Activated CD8-positive, alpha-beta T cell treated with anti-CD3 and anti-CD28 coated beads, Interleukin-2, amount 10 ng/mL, durations not matched to agents 7 days and 5 days (primary cell): ENCODE measurements at regions of chr11 and their contacts with region 1.

Region 1: DNA sequence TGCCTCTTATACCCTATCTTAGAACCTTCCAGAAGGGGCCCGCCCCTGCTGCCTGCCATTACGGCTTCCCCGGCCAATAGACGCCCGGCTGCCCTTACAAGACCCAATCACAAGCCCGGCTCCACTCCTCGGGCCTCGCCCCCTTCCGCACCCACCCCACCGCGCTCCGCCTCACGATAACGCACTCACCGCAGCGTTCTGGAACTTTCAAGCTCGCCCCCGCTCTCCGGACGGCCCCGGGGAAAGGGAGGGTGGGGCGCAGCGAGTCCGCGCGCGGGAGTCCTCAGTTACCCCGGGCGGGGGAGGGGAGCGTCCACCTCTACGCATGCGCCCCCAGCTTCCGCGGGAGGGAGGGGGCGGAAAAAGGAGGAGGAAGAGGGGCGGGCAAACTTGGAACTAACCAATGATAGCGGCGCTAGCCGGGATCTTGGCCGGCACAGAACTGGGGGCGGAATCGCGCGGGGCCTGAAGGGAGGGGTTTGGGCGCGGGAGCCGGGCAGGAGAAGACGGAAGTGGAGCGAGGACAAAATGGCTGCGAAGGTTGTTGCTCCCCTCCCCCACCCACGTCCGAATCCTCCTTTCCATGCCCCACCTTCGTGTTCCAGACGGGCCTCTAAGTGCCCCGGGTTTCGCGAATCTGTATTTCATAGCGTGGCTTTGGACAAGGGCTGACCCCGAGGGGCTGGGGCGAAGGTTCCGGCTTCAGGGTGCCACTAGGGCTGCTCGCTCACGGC is 389 bp upstream of the HSPA8 start:
- DNase-seq: peak; percentile 100
- ATAC-seq: peak; percentile 83
- H3K4me3 Mint-ChIP-seq: peak overlapping the region; percentile 98
- H3K27ac Mint-ChIP-seq: peak overlapping the region; percentile 95
- H3K4me1 Mint-ChIP-seq: peaks cover 31% of the 10 kb centered on the region
- H3K27me3 Mint-ChIP-seq: no peaks in the 10 kb centered on the region

Region 2: DNA sequence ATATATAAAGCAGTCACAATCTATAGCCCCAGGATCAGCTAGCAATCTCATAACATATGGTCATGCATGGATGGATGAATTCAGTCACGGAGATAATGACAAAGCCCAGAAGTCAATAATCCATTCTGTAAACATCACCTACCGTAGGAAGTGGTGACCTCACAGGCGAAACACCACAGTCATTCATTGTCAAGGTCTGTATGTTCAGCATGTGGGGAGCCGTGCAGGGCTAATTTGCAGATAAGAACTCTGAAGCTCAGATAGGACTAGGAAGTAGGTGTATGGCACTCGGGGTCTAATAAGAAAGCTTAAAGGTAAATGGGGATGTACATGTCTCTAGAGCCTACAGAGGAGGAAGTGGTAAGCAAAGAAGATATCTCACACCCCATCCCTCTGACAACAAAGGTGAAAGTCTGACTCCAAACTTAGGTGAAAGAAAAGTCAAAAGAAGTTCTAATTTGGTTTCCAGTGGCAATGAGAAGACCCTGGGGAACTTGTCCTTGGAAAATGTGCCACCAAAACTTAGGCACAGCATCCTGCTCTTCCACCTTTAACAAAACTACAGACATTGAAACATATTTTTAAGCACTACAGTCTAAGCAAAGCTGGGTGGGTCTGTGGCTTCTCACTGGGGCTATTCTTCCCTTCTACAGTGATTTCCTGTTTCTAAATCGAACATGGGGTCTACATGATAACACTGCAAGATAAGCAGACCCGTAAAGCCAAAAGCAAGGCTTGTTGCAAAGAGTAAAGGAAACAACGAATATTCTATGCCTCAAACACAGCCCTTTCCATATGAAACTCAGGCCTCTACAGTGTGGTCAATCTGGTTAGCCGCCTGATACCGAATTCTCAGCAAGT is 218.8 kb before region 1 on chr11:
- CTCF ChIA-PET with region 1: interaction called, 4 read pairs
- POLR2A ChIA-PET with region 1: interaction called, 10 read pairs
- DNase-seq: peak; percentile 82
- ATAC-seq: peak; percentile 84
- H3K4me3 Mint-ChIP-seq: peak overlapping the region; percentile 67
- H3K27ac Mint-ChIP-seq: peak overlapping the region; percentile 94
- H3K4me1 Mint-ChIP-seq: peaks cover 80% of the 10 kb centered on the region
- H3K27me3 Mint-ChIP-seq: no peaks in the 10 kb centered on the region

Region 3: GRCh38 chr11:123046473-123047259 is 15.7 kb before region 1 on chr11:
- CTCF ChIA-PET with region 1: interaction called, 3 read pairs
- POLR2A ChIA-PET with region 1: interaction called, 10 read pairs
- DNase-seq: no peak
- ATAC-seq: no peak
- H3K4me3 Mint-ChIP-seq: no peak overlapping the region
- H3K27ac Mint-ChIP-seq: no peak overlapping the region
- H3K4me1 Mint-ChIP-seq: no peaks in the 10 kb centered on the region
- H3K27me3 Mint-ChIP-seq: no peaks in the 10 kb centered on the region

Region 4: DNA sequence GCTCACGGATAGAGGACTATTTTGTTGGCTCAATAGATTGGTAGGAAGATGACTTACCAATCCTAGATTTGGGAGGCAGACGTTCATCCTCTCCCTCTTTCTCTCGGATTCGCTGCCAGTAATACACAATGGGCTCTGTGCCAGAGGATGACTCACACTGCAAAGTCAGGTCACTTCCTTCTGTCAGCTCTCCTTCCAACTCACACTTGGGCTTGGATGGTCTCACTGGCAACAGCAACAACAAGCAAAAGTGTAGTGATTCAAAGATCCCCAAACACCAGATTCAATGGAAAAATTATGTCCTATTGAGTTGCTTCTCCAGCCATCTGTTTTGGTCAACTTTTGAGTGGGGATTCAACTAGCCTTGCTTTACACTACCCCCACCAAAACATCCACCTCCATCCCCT is 21.3 kb after region 1 on chr11:
- CTCF ChIA-PET with region 1: interaction called, 4 read pairs
- POLR2A ChIA-PET with region 1: interaction called, 104 read pairs
- DNase-seq: peak; percentile 54
- ATAC-seq: peak; percentile 32
- H3K4me3 Mint-ChIP-seq: no peak overlapping the region
- H3K27ac Mint-ChIP-seq: no peak overlapping the region
- H3K4me1 Mint-ChIP-seq: peaks cover 50% of the 10 kb centered on the region
- H3K27me3 Mint-ChIP-seq: no peaks in the 10 kb centered on the region

Region 5: DNA sequence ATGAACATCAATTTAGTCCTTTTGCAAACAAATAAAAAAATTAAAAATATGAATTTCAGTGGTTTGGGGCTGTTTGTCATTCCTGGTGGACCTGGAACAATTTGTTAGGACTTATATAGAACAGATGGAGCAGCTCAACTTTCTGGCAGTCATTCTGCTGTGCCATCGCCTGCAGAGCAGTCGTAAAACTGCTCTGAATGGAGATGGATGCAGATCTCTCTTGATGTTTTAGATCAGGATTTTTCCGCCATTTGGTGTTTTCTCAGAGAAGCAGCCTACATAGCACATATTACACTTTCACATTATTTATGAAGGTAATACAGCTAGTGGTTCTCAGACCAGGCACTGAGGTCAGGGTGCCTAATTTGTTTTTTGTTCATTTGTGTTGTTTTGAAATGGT is 31.4 kb after region 1 on chr11:
- CTCF ChIA-PET with region 1: interaction called, 5 read pairs
- POLR2A ChIA-PET with region 1: interaction called, 104 read pairs
- DNase-seq: no peak
- ATAC-seq: no peak
- H3K4me3 Mint-ChIP-seq: no peak overlapping the region
- H3K27ac Mint-ChIP-seq: no peak overlapping the region
- H3K4me1 Mint-ChIP-seq: peaks cover 3% of the 10 kb centered on the region
- H3K27me3 Mint-ChIP-seq: no peaks in the 10 kb centered on the region

Region 6: GRCh38 chr11:123103326-123103980 is 41.1 kb after region 1 on chr11:
- CTCF ChIA-PET with region 1: interaction called, 24 read pairs
- POLR2A ChIA-PET with region 1: interaction called, 9 read pairs
- DNase-seq: peak; percentile 51
- ATAC-seq: peak; percentile 80
- H3K4me3 Mint-ChIP-seq: no peak overlapping the region
- H3K27ac Mint-ChIP-seq: no peak overlapping the region
- H3K4me1 Mint-ChIP-seq: peaks cover 23% of the 10 kb centered on the region
- H3K27me3 Mint-ChIP-seq: peaks cover 6% of the 10 kb centered on the region

Region 7: DNA sequence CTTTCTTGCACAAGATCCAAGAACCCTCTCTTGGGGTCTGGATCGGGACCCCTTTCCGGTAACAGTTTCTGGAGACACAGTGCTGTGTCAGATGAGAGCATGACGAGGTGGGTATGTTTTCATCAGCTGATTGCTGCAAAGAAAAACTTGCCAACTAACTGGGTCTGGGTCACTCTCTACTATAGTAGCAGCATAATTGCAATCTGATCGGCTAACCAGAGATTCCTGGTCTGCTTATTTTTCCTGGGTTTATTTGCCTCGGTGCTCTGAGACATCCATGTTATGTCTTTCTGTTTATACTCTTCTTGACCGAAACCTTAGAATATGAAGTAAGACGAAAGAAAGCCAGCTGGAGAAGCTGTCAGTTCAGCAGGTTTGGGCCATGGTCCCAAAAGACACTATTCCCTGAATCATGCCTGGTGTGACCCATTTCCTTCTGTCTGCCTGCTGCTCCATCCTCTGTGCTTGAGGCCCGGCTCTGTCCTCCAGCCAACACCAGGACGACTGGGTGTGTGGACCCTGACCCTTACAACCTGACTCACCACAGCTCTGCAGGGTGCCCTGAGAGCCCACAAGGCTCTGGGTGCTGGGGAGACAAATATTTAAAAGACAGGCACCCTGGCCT is 156.9 kb after region 1 on chr11:
- CTCF ChIA-PET with region 1: no interaction called
- POLR2A ChIA-PET with region 1: no interaction called
- DNase-seq: no peak
- ATAC-seq: no peak
- H3K4me3 Mint-ChIP-seq: no peak overlapping the region
- H3K27ac Mint-ChIP-seq: no peak overlapping the region
- H3K4me1 Mint-ChIP-seq: no peaks in the 10 kb centered on the region
- H3K27me3 Mint-ChIP-seq: peaks cover 24% of the 10 kb centered on the region

Region 8: DNA sequence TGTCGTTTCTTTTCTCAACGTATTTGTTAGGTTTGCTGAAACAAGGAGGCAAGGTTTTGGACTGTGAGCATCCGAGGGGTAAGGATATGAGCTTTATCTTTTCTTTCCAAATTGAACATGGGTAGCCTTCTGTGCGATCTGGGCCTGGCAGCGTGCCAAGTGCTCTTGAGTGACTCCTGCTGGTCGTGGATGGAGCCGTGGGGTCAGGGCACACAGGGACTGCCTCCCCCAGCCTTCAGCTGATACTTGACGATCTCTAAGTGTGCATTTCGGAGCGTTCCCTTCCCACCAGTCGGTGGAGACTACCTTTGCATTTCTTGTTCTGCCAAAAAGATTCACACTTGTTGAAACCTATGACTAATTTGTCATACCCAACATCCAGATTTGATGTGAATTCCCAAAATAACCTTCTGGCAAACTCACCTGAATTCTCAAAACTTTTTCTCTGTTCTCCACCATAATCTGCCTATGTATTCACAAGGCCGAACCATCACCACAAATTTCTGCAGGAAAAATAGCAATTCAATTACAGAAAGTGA is 172.9 kb after region 1 on chr11:
- CTCF ChIA-PET with region 1: no interaction called
- POLR2A ChIA-PET with region 1: interaction called, 24 read pairs
- DNase-seq: peak; percentile 46
- ATAC-seq: no peak
- H3K4me3 Mint-ChIP-seq: no peak overlapping the region
- H3K27ac Mint-ChIP-seq: peak overlapping the region; percentile 14
- H3K4me1 Mint-ChIP-seq: peaks cover 32% of the 10 kb centered on the region
- H3K27me3 Mint-ChIP-seq: peaks cover 9% of the 10 kb centered on the region